Right lobe of liver (tissue), 6 donors: ENCODE measurements at regions of chr4 and their contacts with region 1.

Region 1: GRCh38 chr4:77376788-77377460 is 219.9 kb downstream of the CCNG2 start:
- DNase-seq: no peak
- ATAC-seq: no peak
- H3K4me3 ChIP-seq: no peak overlapping the region
- H3K27ac ChIP-seq: no peak overlapping the region
- H3K4me1 ChIP-seq: no peaks in the 10 kb centered on the region
- H3K27me3 ChIP-seq: no peaks in the 10 kb centered on the region
- CTCF ChIP-seq: no peak
- POLR2A ChIP-seq: no peak

Region 2: DNA sequence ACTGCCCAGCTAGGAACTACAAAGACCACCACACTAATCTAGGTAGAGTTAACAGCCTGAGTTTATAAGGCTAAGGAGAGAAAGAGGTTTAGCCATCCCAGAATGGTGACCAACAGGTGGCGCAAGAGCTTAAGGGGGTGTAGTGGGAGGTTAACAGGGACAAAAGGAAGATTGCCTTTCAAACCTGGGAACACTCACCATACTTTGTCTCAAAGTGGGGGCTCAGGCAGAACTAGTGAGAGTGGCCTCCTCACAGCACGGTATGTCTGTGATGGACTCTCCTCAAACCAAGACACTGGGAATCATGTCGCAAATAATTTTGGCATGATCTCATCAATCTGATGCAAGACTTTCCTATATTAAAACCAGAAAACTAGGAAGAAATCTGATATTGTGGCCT is 324.6 kb before region 1 on chr4:
- intact Hi-C with region 1: no loop called
- DNase-seq: peak in 2 of 3 donors; percentile 52 to 54
- ATAC-seq: peak; percentile 66 to 78 (median 70)
- H3K4me3 ChIP-seq: no peak overlapping the region
- H3K27ac ChIP-seq: no peak overlapping the region
- H3K4me1 ChIP-seq: peaks cover 0 to 7% (median 0%) of the 10 kb centered on the region in 4 donors
- H3K27me3 ChIP-seq: no peaks in the 10 kb centered on the region
- CTCF ChIP-seq: peak; percentile 21 to 55 (median 44)
- POLR2A ChIP-seq: no peak

Region 3: GRCh38 chr4:77699731-77700210 is 322.8 kb after region 1 on chr4:
- intact Hi-C with region 1: loop called in 1 of 2 experiments (anchors 10 kb)
- DNase-seq: no peak
- ATAC-seq: peak in 2 of 4 donors; percentile 16 to 25
- H3K4me3 ChIP-seq: no peak overlapping the region
- H3K27ac ChIP-seq: no peak overlapping the region
- H3K4me1 ChIP-seq: peaks cover 0 to 11% (median 3%) of the 10 kb centered on the region in 4 donors
- H3K27me3 ChIP-seq: no peaks in the 10 kb centered on the region
- CTCF ChIP-seq: no peak
- POLR2A ChIP-seq: no peak